ENCODE measurements at regions of chr10 and their contacts with region 1.

Region 1: GRCh38 chr10:110600487-110601101 is 33.1 kb downstream of the SMC3 start:
- H3K4me3 ChIP-seq: no peak overlapping the region
- H3K27ac ChIP-seq: no peak overlapping the region
- H3K4me1 ChIP-seq: no peaks in the 10 kb centered on the region
- CTCF ChIP-seq: 0 out of 2 replicates have a peak, but pooled peaks have one; percentile 27

Region 2: DNA sequence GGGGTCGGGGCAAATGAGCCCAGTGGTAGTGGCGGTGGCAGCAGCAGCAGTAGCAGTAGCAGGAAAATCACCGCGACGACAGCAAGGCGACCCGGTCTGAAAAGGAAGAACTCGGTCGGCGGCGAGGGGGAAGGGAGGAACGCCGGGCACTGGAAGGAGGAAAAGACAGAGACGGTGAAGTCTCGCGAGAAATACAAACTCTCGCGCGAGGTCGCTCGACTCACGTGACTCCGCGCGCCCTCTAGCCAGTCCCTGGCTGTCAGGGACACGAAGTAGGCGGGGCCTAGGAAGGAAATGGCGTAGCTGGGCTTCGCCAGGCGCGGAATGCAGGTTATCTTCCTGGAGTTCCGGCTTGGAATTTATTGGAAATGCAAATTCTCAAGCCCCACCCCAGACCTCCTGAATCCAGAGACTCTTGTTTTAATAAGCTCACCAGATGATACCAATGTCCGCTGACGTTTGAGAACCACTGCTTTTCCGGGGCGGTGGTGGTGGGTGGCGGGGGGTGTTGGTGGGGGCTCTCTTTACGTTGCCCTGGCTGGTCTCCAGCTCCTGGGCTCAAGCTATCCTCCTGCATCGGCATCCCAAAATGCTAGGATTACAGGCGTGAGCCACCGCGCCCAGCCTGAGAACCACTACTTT is 295.7 kb before region 1 on chr10 and contains the start of gene SMNDC1:
- CTCF ChIA-PET with region 1: interaction called, 16 read pairs
- POLR2A ChIA-PET with region 1: interaction called, 6 read pairs
- H3K4me3 ChIP-seq: peak within 1 kb of the TSS; percentile 54
- H3K27ac ChIP-seq: peak within 1 kb of the TSS; percentile 90
- H3K4me1 ChIP-seq: peaks cover 9% of the 10 kb centered on the region
- CTCF ChIP-seq: no peak

Region 3: DNA sequence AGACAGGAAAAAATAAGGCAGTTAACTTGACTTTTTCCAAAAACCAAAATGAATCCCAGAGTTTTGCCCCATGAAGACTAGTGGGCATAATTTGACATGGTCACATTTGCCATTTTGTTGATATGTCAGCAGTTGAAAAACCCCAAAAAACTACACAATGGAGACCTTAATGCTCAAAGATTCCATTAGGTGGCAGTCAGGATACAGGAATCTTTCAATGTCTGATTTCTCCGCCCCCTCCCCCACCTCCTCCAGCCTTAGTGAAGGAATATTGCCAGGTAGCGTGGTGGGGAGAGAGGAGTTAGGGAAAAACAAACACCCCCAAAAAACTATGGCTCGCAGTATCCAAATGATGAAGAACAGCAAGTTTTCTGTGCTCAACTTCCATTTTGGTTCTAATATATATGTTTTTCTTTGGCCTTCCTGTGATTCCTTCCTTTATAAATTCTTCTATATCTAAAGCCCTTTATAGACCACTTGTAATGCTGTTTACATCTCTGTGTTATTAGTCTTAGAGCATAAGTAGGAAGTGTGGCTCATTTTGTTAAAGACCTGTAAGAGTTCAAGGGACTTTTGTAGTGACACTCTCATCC is 289.1 kb before region 1 on chr10:
- CTCF ChIA-PET with region 1: interaction called, 16 read pairs
- POLR2A ChIA-PET with region 1: no interaction called
- H3K4me3 ChIP-seq: no peak overlapping the region
- H3K27ac ChIP-seq: no peak overlapping the region
- H3K4me1 ChIP-seq: no peaks in the 10 kb centered on the region
- CTCF ChIP-seq: peak; percentile 57; the same call in 1 of the 2 replicates

Region 4: GRCh38 chr10:110584006-110584405 is 16.6 kb before region 1 on chr10:
- CTCF ChIA-PET with region 1: interaction called, 13 read pairs
- POLR2A ChIA-PET with region 1: no interaction called
- H3K4me3 ChIP-seq: no peak overlapping the region
- H3K27ac ChIP-seq: no peak overlapping the region
- H3K4me1 ChIP-seq: no peaks in the 10 kb centered on the region
- CTCF ChIP-seq: no peak

Measured in HEK293 (cell line).